ENCODE measurements at regions of chr5 and their contacts with region 1.

Region 1: GRCh38 chr5:74974451-74975091 is 77.8 kb downstream of the GCNT4 start:
- DNase-seq: peak; percentile 55
- H3K4me3 Mint-ChIP-seq: no peak overlapping the region
- H3K27ac Mint-ChIP-seq: peak overlapping the region; percentile 83
- H3K4me1 Mint-ChIP-seq: peaks cover 25% of the 10 kb centered on the region
- H3K27me3 Mint-ChIP-seq: no peaks in the 10 kb centered on the region

Region 2: GRCh38 chr5:75023368-75024159 is 49.0 kb after region 1 on chr5:
- CTCF ChIA-PET with region 1: no interaction called
- intact Hi-C with region 1: loop called (anchors 2 kb)
- DNase-seq: peak; percentile 55
- H3K4me3 Mint-ChIP-seq: peak overlapping the region; percentile 8
- H3K27ac Mint-ChIP-seq: no peak overlapping the region
- H3K4me1 Mint-ChIP-seq: peaks cover 32% of the 10 kb centered on the region
- H3K27me3 Mint-ChIP-seq: no peaks in the 10 kb centered on the region

Region 3: GRCh38 chr5:75037135-75037534 is 62.6 kb after region 1 on chr5:
- CTCF ChIA-PET with region 1: no interaction called
- intact Hi-C with region 1: loop called (anchors 1 kb)
- DNase-seq: peak; percentile 62
- H3K4me3 Mint-ChIP-seq: no peak overlapping the region
- H3K27ac Mint-ChIP-seq: no peak overlapping the region
- H3K4me1 Mint-ChIP-seq: peaks cover 56% of the 10 kb centered on the region
- H3K27me3 Mint-ChIP-seq: no peaks in the 10 kb centered on the region

Region 4: GRCh38 chr5:75091597-75091996 is 117.0 kb after region 1 on chr5:
- CTCF ChIA-PET with region 1: no interaction called
- intact Hi-C with region 1: loop called (anchors 1 kb)
- DNase-seq: no peak
- H3K4me3 Mint-ChIP-seq: no peak overlapping the region
- H3K27ac Mint-ChIP-seq: no peak overlapping the region
- H3K4me1 Mint-ChIP-seq: peaks cover 34% of the 10 kb centered on the region
- H3K27me3 Mint-ChIP-seq: no peaks in the 10 kb centered on the region